Natural killer cell (primary cell): ENCODE measurements at regions of chr6 and their contacts with region 1.

Region 1: DNA sequence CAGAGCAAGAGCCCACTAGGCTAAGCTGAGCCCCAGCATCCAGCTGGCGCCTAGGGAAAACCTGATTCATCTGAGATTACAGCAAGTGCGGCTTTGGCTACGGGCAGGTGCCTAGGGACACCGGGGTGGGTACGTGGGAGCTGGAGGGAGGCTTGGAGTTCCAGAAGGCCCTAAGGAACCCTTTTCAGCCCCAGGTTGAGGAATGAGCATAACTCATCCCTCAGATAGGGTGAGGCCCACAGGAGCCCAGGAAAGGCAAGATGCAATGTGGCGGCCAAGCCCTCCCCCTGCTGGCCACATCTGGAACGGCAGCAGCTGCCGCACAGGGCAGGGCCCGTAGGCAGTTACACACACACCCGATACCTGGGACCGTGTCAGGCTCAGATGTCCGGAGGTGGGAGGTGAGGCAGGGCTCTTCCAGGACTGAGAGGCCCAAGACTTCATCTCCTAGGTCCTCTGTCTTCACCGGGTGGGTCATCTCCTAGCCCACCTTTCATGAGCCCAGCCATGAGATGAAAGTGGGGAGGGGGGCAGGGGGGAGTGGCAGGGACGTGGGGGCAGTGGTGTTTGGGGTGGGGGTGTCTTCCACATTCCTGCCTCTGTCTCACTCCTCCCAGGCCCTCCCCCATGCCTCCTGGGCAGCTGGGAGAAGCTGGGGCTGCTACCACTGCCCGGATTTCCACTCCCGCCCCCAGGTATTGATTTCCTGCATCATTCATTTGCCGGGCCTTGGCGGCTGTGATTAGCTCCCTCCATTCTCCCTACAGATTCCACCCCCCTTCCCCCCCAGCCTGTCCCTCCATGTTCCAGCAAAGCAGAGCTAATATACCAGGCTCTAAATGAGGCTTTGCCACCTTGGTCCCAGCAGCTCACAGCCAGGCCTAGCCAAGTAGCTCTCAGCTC is 5.5 kb downstream of the MDGA1 start:
- DNase-seq: peak; percentile 72 to 85
- ATAC-seq: peak; percentile 71 to 79 (median 76)
- H3K4me3 ChIP-seq: no peak overlapping the region
- H3K4me3 Mint-ChIP-seq: no peak overlapping the region
- H3K27ac ChIP-seq: no peak overlapping the region
- H3K27ac Mint-ChIP-seq: no peak overlapping the region
- H3K4me1 ChIP-seq: peaks cover 23% of the 10 kb centered on the region
- H3K4me1 Mint-ChIP-seq: peaks cover 20 to 21% of the 10 kb centered on the region in 2 donors
- H3K27me3 ChIP-seq: peaks cover 6% of the 10 kb centered on the region
- H3K27me3 Mint-ChIP-seq: peaks cover 10 to 32% of the 10 kb centered on the region in 2 donors
- CTCF ChIP-seq: peak; percentile 92

Region 2: GRCh38 chr6:37324131-37325033 is 367.8 kb before region 1 on chr6:
- intact Hi-C with region 1: loop called (anchors 1 kb)
- DNase-seq: no peak
- ATAC-seq: no peak
- H3K4me3 ChIP-seq: no peak overlapping the region
- H3K4me3 Mint-ChIP-seq: no peak overlapping the region
- H3K27ac ChIP-seq: no peak overlapping the region
- H3K27ac Mint-ChIP-seq: no peak overlapping the region
- H3K4me1 ChIP-seq: no peaks in the 10 kb centered on the region
- H3K4me1 Mint-ChIP-seq: peaks cover 0 to 5% of the 10 kb centered on the region in 2 donors
- H3K27me3 ChIP-seq: no peaks in the 10 kb centered on the region
- H3K27me3 Mint-ChIP-seq: no peaks in the 10 kb centered on the region
- CTCF ChIP-seq: no peak

Region 3: DNA sequence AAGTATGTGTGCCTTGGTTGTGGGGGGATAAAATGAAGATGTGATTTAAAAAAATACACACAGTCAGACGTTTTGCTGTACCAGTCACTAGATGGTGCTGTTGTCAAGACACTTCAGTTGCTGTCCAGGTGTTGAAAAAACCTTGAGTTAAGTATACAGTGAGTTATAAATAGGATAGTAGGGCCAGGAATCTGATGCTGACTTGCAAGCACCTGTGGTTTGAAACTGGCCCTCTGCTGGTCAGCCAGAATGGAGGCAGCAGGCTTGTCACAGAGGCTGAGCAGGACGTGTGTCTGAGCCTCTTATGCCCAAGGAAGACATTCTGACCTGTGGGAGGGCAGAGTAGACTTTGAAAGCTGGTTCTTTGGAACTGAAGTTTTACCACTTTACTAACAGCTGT is 310.6 kb before region 1 on chr6:
- intact Hi-C with region 1: loop called (anchors 2 kb)
- DNase-seq: peak in 1 of 2 donors; percentile 74
- ATAC-seq: peak; percentile 52 to 67 (median 66)
- H3K4me3 ChIP-seq: no peak overlapping the region
- H3K4me3 Mint-ChIP-seq: no peak overlapping the region
- H3K27ac ChIP-seq: no peak overlapping the region
- H3K27ac Mint-ChIP-seq: no peak overlapping the region
- H3K4me1 ChIP-seq: no peaks in the 10 kb centered on the region
- H3K4me1 Mint-ChIP-seq: no peaks in the 10 kb centered on the region
- H3K27me3 ChIP-seq: no peaks in the 10 kb centered on the region
- H3K27me3 Mint-ChIP-seq: no peaks in the 10 kb centered on the region
- CTCF ChIP-seq: peak; percentile 58

Region 4: GRCh38 chr6:37483917-37484785 is 208.0 kb before region 1 on chr6:
- intact Hi-C with region 1: loop called (anchors 2 kb)
- DNase-seq: peak; percentile 74 to 90
- ATAC-seq: peak; percentile 83 to 95 (median 92)
- H3K4me3 ChIP-seq: no peak overlapping the region
- H3K4me3 Mint-ChIP-seq: no peak overlapping the region
- H3K27ac ChIP-seq: no peak overlapping the region
- H3K27ac Mint-ChIP-seq: no peak overlapping the region
- H3K4me1 ChIP-seq: peaks cover 13% of the 10 kb centered on the region
- H3K4me1 Mint-ChIP-seq: peaks cover 7 to 14% of the 10 kb centered on the region in 2 donors
- H3K27me3 ChIP-seq: no peaks in the 10 kb centered on the region
- H3K27me3 Mint-ChIP-seq: no peaks in the 10 kb centered on the region
- CTCF ChIP-seq: peak; percentile 91

Region 5: DNA sequence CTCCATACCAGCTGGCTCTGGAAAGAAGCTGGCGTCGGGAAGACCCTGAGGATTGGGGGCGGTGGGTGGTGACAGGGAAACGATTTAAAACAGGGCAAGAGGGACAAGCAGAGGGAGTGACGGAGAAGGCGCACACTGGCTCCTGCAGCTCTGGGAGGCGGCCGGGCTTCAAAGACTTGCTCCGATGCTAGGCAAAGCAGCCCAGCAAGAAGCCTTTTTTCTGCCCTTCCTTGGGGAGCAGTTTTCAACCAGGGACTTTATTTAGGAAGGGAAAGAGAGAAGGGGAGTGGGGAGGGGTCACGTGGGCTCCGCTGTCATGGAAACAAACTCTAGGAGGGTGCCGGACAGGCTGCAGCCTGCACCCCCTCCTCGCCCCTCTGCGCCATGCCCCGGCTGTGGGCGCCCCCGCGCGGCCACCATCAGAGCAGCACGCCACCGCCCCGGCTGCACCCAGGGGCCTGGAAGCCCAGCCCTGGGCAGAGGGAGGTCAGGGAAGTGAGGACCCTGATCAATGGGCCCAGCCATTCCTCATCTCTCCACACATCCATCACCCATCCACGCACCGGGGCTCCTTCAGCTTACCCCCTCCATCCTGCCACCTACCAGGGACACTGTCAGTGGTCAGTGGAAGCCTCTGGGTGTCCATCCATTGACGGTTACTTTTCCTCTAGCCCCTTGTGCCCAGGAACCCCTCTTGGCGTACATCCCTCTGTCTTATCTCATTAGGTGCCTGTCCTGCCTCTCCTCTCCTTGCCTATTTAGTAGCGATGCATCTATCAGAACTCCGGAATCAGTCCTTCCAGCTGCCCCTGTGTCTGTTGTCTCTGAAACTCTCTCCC is 125.8 kb before region 1 on chr6:
- intact Hi-C with region 1: loop called (anchors 2 kb)
- DNase-seq: peak; percentile 74 to 82
- ATAC-seq: peak; percentile 83 to 99 (median 99)
- H3K4me3 ChIP-seq: peak overlapping the region; percentile 11
- H3K4me3 Mint-ChIP-seq: peak overlapping the region; percentile 60
- H3K27ac ChIP-seq: no peak overlapping the region
- H3K27ac Mint-ChIP-seq: peak overlapping the region in 1 of 2 donors; percentile 8
- H3K4me1 ChIP-seq: peaks cover 23% of the 10 kb centered on the region
- H3K4me1 Mint-ChIP-seq: peaks cover 4 to 11% of the 10 kb centered on the region in 2 donors
- H3K27me3 ChIP-seq: peaks cover 6% of the 10 kb centered on the region
- H3K27me3 Mint-ChIP-seq: peaks cover 22 to 37% of the 10 kb centered on the region in 2 donors
- CTCF ChIP-seq: peak; percentile 99

Region 6: DNA sequence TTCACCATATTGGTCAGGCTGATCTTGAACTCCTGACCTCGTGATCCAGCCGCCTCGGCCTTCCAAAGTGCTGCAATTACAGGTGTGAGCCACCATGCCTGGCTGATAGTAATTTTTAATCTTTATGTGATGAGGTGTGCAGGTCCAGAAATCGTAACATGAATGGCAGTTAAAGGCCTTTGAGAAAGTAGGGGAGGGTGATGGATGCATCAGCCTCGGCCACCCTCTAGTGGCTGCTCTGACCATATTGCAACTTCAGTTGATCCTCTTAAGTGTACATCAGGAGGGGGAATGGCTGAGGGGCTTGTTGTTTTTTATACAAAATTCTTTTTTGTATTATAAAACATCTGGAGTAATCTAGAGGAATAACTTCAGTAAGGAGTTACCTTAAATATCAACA is 320.4 kb after region 1 on chr6:
- intact Hi-C with region 1: loop called (anchors 2 kb)
- DNase-seq: peak; percentile 19 to 53
- ATAC-seq: peak in 2 of 3 donors; percentile 80 to 85
- H3K4me3 ChIP-seq: no peak overlapping the region
- H3K4me3 Mint-ChIP-seq: no peak overlapping the region
- H3K27ac ChIP-seq: no peak overlapping the region
- H3K27ac Mint-ChIP-seq: no peak overlapping the region
- H3K4me1 ChIP-seq: no peaks in the 10 kb centered on the region
- H3K4me1 Mint-ChIP-seq: peaks cover 38 to 50% of the 10 kb centered on the region in 2 donors
- H3K27me3 ChIP-seq: no peaks in the 10 kb centered on the region
- H3K27me3 Mint-ChIP-seq: no peaks in the 10 kb centered on the region
- CTCF ChIP-seq: peak; percentile 67

Region 7: DNA sequence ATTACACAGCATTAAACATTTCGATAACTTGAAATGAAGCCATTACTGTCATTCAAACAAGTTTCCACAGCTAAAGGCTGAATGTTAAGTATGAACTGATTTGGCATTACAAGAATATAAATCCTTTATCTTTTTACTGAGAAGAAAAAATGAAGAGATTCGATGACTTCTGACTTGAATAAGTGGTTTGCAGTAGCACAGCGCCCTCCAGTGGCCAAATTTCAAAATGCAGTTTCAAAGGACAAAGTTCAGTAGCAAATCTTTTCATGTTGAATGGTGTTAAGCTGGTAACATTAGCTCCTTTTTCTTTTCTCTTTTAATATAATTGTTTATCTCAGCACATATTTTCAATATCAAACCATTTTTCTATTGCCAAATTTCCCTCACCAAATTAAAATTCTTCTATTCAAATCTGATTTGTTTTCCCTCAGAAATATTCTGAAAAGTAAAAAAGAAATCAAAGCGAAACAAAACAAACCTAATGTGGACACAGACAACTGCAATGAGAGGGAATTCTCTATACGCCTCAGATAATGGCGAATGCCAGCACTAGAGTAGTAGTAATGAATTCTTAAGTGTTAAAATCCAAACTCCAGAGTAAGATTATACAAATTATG is 801.9 kb after region 1 on chr6:
- intact Hi-C with region 1: loop called (anchors 2 kb)
- DNase-seq: peak; percentile 71 to 85
- ATAC-seq: peak; percentile 43 to 70 (median 58)
- H3K4me3 ChIP-seq: no peak overlapping the region
- H3K4me3 Mint-ChIP-seq: no peak overlapping the region
- H3K27ac ChIP-seq: no peak overlapping the region
- H3K27ac Mint-ChIP-seq: no peak overlapping the region
- H3K4me1 ChIP-seq: peaks cover 11% of the 10 kb centered on the region
- H3K4me1 Mint-ChIP-seq: peaks cover 22 to 26% of the 10 kb centered on the region in 2 donors
- H3K27me3 ChIP-seq: no peaks in the 10 kb centered on the region
- H3K27me3 Mint-ChIP-seq: no peaks in the 10 kb centered on the region
- CTCF ChIP-seq: peak; percentile 98